MCF 10A (cell line): ENCODE measurements at regions of chr6 and their contacts with region 1.

Region 1: GRCh38 chr6:48078120-48078519 is 32.9 kb downstream of the PTCHD4 start:
- DNase-seq: peak; percentile 49
- H3K4me3 Mint-ChIP-seq: no peak overlapping the region
- H3K27ac Mint-ChIP-seq: no peak overlapping the region
- H3K4me1 Mint-ChIP-seq: peaks cover 23% of the 10 kb centered on the region
- H3K27me3 Mint-ChIP-seq: no peaks in the 10 kb centered on the region
- CTCF ChIP-seq: no peak

Region 2: DNA sequence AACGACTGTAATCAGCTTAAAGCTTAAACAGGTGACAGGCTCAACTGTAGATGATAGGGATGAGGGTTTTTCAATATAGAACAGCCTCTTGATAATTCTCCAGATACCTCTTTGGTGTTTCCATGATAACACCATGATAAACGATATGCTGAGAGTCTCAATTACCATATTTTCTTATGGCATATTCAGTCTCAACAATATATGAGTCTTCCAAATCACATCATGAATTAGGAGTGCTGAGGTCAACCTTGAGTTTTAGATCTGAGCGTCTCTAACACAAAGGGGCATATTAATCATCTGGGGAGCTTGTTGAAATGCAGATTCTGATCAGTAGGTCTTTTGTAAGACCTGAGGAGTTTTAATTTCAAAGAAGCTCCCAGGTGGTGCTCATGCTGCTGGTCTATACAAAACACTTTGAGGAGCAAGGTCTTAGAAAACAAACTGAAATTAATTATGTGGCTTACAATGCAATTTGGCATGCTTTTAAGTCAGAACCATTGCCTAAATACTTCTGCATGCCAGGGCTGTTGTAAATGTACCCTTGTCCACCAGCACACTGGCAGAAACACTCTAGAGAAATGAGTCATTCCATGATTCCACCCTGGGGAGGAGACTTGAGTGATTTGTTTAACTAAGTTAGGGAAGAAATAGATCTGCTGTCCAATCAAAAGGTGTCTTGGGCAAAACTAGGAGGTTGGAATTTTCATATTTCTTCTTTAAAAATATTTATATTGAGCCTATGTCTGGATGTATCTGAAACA is 16.7 kb before region 1 on chr6:
- CTCF ChIA-PET with region 1: interaction called, 3 read pairs
- POLR2A ChIA-PET with region 1: interaction called, 10 read pairs
- intact Hi-C with region 1: no loop called
- DNase-seq: peak; percentile 65
- H3K4me3 Mint-ChIP-seq: no peak overlapping the region
- H3K27ac Mint-ChIP-seq: peak overlapping the region; percentile 71
- H3K4me1 Mint-ChIP-seq: peaks cover 12% of the 10 kb centered on the region
- H3K27me3 Mint-ChIP-seq: no peaks in the 10 kb centered on the region
- CTCF ChIP-seq: no peak